ENCODE measurements at regions of chr4 and their contacts with region 1.

Region 1: DNA sequence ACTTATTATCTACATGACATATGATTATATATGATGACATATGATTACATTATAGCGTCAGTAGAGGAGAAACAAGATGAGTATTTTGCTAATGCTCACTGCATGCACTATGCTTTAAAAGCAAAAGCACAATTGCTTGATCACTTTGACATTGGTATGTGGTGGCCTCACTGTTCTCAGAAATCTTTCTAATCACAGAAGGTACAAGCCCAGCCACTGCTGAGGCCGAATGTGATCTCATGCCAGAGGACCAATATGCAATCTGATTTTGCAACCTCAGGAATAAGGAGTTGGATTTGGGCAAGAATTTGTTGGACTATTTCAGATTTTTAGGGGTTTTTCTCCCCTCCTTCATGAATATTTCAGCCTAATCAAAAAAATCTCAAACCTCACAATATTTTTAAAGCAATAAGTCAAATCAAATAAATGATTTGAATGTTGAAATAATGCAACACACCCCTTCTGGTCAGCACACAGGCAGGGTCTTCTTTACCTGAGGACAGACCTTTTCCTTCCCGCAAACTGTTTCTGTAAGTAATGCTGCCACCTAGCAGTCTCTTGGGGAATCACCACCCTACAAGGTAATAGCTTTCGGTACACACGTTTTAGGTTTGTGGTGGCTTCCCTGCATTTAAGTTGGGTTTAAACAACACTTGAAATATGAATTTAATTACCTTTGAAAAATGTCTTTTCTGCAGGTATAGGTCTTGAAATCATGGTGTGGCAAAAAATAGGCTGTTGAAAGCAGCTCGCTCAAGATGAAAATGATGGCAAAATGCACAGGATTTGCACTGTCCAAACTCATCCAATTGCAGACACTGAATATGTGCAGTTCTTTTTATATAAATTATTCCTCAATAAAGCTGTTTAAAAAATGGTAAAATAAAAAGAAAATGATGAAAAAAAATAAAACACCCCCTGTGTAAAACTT is 4.8 kb upstream of the CXCL13 start:
- DNase-seq: no peak
- H3K4me3 ChIP-seq: no peak overlapping the region
- H3K27ac ChIP-seq: no peak overlapping the region
- H3K4me1 ChIP-seq: no peaks in the 10 kb centered on the region
- H3K27me3 ChIP-seq: peaks cover 38% of the 10 kb centered on the region
- CTCF ChIP-seq: peak; percentile 84

Region 2: GRCh38 chr4:77157859-77158486 is 442.8 kb before region 1 on chr4:
- intact Hi-C with region 1: no loop called
- DNase-seq: peak; percentile 88
- H3K4me3 ChIP-seq: peak overlapping the region; percentile 97
- H3K27ac ChIP-seq: peak overlapping the region; percentile 93
- H3K4me1 ChIP-seq: peaks cover 34% of the 10 kb centered on the region
- H3K27me3 ChIP-seq: no peaks in the 10 kb centered on the region
- CTCF ChIP-seq: no peak

Region 3: GRCh38 chr4:77385124-77385969 is 215.4 kb before region 1 on chr4:
- intact Hi-C with region 1: loop called (anchors 5 kb)
- DNase-seq: peak; percentile 22
- H3K4me3 ChIP-seq: no peak overlapping the region
- H3K27ac ChIP-seq: no peak overlapping the region
- H3K4me1 ChIP-seq: no peaks in the 10 kb centered on the region
- H3K27me3 ChIP-seq: peaks cover 7% of the 10 kb centered on the region
- CTCF ChIP-seq: peak; percentile 88

Region 4: DNA sequence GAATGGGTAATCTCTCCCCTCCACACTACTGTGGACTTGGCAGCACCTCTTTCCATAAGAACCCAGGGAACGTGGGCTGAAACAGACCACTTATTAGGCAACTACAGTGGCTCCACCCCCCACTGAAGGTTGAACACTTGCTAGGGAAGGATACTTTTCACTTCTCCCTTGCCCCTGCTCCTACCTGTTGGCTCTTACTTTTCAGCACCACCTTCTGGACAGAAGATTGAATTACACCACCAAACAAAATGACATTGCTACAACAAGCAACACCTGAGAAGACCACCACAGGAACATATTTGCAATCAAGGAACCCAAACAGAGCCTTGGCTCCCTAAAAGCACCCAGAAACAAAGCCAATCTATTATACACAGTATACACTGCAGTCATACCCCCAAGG is 127.3 kb before region 1 on chr4:
- intact Hi-C with region 1: loop called (anchors 10 kb)
- DNase-seq: no peak
- H3K4me3 ChIP-seq: no peak overlapping the region
- H3K27ac ChIP-seq: no peak overlapping the region
- H3K4me1 ChIP-seq: no peaks in the 10 kb centered on the region
- H3K27me3 ChIP-seq: peaks cover 16% of the 10 kb centered on the region
- CTCF ChIP-seq: no peak

Region 5: GRCh38 chr4:77692847-77693432 is 92.2 kb after region 1 on chr4:
- intact Hi-C with region 1: no loop called
- DNase-seq: no peak
- H3K4me3 ChIP-seq: no peak overlapping the region
- H3K27ac ChIP-seq: no peak overlapping the region
- H3K4me1 ChIP-seq: peaks cover 6% of the 10 kb centered on the region
- H3K27me3 ChIP-seq: no peaks in the 10 kb centered on the region
- CTCF ChIP-seq: no peak

Region 6: GRCh38 chr4:77742054-77742453 is 141.3 kb after region 1 on chr4:
- intact Hi-C with region 1: no loop called
- DNase-seq: no peak
- H3K4me3 ChIP-seq: no peak overlapping the region
- H3K27ac ChIP-seq: no peak overlapping the region
- H3K4me1 ChIP-seq: peaks cover 9% of the 10 kb centered on the region
- H3K27me3 ChIP-seq: no peaks in the 10 kb centered on the region
- CTCF ChIP-seq: no peak

Region 7: DNA sequence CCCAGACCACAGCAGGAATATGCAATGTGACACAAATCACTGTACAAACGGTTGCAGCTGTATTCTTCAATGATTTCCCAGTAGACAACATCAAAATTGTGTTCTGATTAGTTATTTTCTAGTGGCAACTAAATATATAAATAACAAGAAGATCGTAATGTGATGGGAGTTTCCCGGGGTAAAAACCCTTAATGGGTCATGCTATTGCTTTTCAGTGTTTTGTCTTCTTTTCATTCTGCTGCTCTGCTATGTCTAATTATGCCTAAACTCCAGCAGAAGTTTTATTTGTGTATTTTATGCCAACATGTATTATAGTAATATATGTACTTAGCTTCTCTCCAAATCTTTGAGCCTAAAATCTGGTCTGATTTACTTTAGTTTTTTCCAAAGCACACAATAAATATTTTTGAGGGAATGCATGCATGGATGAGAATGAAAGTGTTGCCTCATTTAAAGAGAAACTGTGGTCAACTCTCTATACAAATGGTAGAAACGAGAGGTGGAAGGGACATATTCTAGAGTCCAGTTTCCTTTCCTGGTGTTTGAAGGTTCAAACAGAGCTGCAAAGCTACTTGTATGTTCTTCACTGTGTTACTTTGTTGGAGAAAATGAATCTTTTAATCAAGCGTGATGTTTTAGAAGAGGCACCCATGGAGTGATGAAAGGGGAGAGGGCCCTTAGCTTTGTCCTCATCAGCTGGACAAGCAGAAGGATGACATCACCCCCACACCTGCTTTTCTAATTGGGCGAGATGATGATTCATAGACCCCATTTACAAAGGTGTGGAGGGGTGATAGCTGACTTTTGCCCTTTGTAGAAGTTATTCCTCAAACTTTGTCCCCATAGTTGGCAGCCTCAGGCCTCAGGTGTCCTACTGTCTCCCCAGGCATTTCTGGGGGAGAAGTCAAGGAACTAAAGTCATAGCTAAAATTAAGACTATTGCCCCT is 586.1 kb after region 1 on chr4:
- intact Hi-C with region 1: no loop called
- DNase-seq: no peak
- H3K4me3 ChIP-seq: no peak overlapping the region
- H3K27ac ChIP-seq: no peak overlapping the region
- H3K4me1 ChIP-seq: no peaks in the 10 kb centered on the region
- H3K27me3 ChIP-seq: no peaks in the 10 kb centered on the region
- CTCF ChIP-seq: no peak

Measured in left ventricle myocardium inferior (tissue), 1 donor.